ENCODE measurements at regions of chr22 and their contacts with region 1.

Region 1: DNA sequence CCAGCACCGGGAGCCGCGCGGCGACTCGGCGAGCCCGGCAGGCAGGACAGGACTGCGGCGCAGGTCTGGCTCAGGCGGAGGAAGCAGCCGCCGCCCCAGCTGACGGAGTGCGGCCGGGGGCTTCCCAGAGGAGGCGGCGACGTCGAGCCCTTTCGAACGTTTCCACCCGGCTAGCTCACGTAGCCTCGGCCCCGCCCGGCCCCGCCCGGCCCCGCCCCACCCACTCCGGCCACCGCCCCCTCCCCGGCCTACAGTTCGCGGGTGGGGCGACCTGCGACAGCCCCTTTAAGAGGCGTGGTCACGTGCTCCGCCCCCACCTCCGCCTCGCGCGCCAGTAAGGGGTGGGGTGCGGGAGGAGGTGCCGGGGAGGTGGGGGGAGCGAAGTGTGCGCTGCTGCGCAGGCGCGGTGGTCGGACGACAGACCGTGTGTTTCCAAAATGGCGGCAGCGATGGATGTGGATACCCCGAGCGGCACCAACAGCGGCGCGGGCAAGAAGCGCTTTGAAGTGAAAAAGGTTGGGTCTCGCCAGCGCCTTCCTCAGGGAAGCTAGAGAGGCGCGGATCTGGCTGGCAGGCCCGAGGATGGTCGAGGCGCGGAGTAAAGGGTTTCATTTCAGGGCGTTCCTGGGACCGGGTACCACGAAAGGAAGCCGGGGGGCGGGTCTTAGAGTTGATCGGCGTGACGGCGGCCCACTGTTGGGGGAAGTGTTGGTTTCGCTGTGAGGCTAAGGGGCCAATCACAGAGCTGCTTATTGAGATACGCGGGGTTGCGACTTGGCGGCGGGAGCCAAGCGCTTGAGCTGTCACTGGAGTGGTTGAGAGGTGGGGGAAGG is at the start of gene RBX1:
- DNase-seq: peak; percentile 100
- H3K4me3 ChIP-seq: peak within 1 kb of the TSS; percentile 62 to 95 (median 80)
- H3K27ac ChIP-seq: peak within 1 kb of the TSS; percentile 88 to 99 (median 98)
- H3K4me1 ChIP-seq: peaks cover 15 to 58% (median 35%) of the 10 kb centered on the region in 6 donors
- H3K27me3 ChIP-seq: no peaks in the 10 kb centered on the region
- CTCF ChIP-seq: peak in 1 of 11 experiments; percentile 5
- POLR2A ChIP-seq: peak; percentile 78 to 95 (median 92)
- total RNA-seq, gene RBX1: 28.0 to 45.6 (median 40.7) TPM

Region 2: DNA sequence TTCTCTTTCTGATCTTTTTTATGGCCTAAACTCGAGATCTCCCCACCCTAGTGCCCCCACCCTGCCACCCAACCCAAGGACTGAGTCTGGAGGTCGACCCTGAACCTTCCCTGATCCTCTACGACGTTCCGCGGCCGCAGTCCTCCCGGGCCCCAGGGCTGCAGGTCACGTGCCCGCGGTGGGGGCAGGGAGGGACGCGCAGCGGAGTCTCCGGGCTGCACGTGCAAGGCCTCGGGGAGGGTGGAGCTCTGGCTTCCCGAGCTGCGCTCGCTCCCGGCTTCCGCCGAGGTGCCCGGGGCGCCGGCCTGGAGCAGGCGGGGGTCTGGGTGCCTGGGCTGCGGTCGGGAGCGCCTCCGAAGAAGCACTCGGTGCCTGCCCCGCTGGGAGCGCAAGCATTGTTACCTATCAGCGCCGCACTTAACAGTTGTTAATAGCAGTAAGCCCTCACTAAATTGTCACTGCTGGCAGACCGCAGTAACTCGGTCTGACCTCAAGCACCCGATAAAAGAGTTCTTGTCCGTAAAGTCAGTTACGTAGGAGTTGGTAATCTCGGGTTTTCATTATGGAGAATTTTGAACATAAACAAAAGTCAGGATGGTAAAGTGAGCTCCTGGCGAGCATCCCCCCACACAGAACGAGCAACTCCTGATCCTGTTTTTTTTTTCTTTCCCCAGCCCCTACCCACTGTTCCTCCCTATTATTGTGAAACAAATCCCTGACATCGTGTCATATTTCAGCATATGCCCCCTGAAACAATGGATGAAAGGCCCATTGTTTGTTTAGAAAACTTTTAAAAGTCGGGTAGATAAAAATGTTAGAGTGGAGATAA is 71.5 kb after region 1 on chr22:
- intact Hi-C with region 1: loop called (anchors 10 kb)
- DNase-seq: peak; percentile 98
- H3K4me3 ChIP-seq: peak overlapping the region; percentile 55 to 71 (median 67)
- H3K27ac ChIP-seq: peak overlapping the region; percentile 94 to 100 (median 98)
- H3K4me1 ChIP-seq: peaks cover 6 to 34% (median 19%) of the 10 kb centered on the region in 6 donors
- H3K27me3 ChIP-seq: no peaks in the 10 kb centered on the region
- CTCF ChIP-seq: peak in 2 of 11 experiments; percentile 5 to 18
- POLR2A ChIP-seq: peak in 2 of 3 donors; percentile 33 to 75

Region 3: GRCh38 chr22:41038732-41039445 is 87.7 kb after region 1 on chr22:
- intact Hi-C with region 1: no loop called
- DNase-seq: no peak
- H3K4me3 ChIP-seq: no peak overlapping the region
- H3K27ac ChIP-seq: no peak overlapping the region
- H3K4me1 ChIP-seq: peaks cover 0 to 16% (median 1%) of the 10 kb centered on the region in 6 donors
- H3K27me3 ChIP-seq: no peaks in the 10 kb centered on the region
- CTCF ChIP-seq: no peak
- POLR2A ChIP-seq: no peak

Measured in spleen (tissue), 13 donors.